GM18951 (cell line): ENCODE measurements at regions of chr2 and their contacts with region 1.

Region 1: GRCh38 chr2:71558300-71559051 is 105.1 kb downstream of the DYSF start:
- POLR2A ChIP-seq: no peak

Region 2: DNA sequence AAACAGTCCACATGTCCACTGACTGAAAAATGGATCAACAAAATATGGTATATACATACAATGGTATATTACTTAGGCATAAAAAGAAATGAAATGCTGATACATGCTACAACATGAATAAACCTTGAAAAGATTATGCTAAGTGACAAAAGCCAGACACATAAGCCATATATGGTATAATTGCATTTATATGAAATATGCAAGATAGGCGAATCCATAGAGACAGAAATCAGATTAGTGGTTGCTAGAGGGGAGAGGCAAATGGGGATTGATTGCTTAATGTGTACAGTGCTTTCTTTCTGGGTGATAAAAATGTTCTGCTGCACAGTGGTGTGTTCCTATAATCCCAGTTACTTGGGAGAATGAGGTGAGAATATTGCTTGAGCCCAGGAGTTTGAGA is 418.2 kb after region 1 on chr2:
- in situ Hi-C with region 1: no loop called
- POLR2A ChIP-seq: no peak

Region 3: GRCh38 chr2:72150157-72150865 is 591.8 kb after region 1 on chr2:
- in situ Hi-C with region 1: loop called (anchors 10 kb)
- POLR2A ChIP-seq: no peak